ENCODE measurements at regions of chr9 and their contacts with region 1.

Region 1: GRCh38 chr9:124617471-124618141 is 110.4 kb upstream of the NR5A1 start:
- DNase-seq: peak; percentile 75
- H3K4me3 ChIP-seq: no peak overlapping the region
- H3K27ac ChIP-seq: no peak overlapping the region
- H3K4me1 ChIP-seq: no peaks in the 10 kb centered on the region
- H3K27me3 ChIP-seq: peaks cover 0 to 8% of the 10 kb centered on the region in 2 experiments
- CTCF ChIP-seq: peak; percentile 82 to 89
- POLR2A ChIP-seq: no peak

Region 2: DNA sequence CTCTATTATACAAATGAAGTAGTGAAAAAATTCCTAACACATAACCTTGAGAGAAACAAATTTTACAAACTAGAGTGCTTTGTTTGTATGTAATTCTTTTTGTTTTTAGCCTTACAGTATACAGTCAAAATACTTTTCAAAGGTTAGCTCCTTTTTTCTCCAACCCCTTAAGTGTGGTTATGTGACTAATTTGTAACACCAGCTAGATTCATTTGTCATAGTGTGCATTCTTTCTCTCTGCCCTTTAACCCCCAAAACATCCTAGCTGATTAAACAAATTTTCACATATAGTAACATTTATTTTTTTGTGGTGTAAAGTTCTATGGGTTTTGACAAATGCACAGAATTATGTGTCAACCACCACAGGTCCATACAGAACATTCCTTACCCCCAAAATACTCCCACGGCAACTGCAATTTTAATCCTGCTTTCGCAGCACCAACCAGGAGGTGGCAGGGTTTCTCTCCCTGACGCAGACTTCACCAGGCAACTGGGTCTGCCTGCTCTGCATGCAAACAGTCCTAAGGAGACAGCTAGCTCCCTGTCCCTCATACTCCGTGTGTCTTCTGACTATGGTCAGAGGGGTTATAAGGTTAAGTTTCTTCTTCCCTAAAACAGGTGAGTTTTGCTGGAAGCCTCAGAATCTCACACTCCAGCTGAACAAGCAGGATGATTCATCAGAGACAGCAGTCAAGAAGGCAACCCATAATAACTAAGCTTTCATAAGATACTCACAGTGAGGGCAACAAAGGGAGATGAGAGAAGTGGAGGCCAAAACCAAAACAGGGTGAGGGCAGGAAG is 65.9 kb before region 1 on chr9:
- CTCF ChIA-PET with region 1: interaction called, 28 read pairs
- POLR2A ChIA-PET with region 1: no interaction called
- dilution Hi-C with region 1: no loop called
- intact Hi-C with region 1: no loop called
- DNase-seq: peak; percentile 59
- H3K4me3 ChIP-seq: no peak overlapping the region
- H3K27ac ChIP-seq: no peak overlapping the region
- H3K4me1 ChIP-seq: no peaks in the 10 kb centered on the region
- H3K27me3 ChIP-seq: peaks cover 11 to 13% of the 10 kb centered on the region in 2 experiments
- CTCF ChIP-seq: peak; percentile 61 to 62
- POLR2A ChIP-seq: no peak

Region 3: GRCh38 chr9:124632077-124632621 is 14.5 kb after region 1 on chr9:
- CTCF ChIA-PET with region 1: interaction called, 26 read pairs
- POLR2A ChIA-PET with region 1: no interaction called
- dilution Hi-C with region 1: no loop called
- intact Hi-C with region 1: no loop called
- DNase-seq: peak; percentile 57
- H3K4me3 ChIP-seq: no peak overlapping the region
- H3K27ac ChIP-seq: no peak overlapping the region
- H3K4me1 ChIP-seq: no peaks in the 10 kb centered on the region
- H3K27me3 ChIP-seq: peaks cover 0 to 2% of the 10 kb centered on the region in 2 experiments
- CTCF ChIP-seq: no peak
- POLR2A ChIP-seq: no peak

Region 4: GRCh38 chr9:124675261-124676158 is 57.9 kb after region 1 on chr9:
- CTCF ChIA-PET with region 1: interaction called, 19 read pairs
- POLR2A ChIA-PET with region 1: no interaction called
- dilution Hi-C with region 1: no loop called
- intact Hi-C with region 1: no loop called
- DNase-seq: no peak
- H3K4me3 ChIP-seq: no peak overlapping the region
- H3K27ac ChIP-seq: no peak overlapping the region
- H3K4me1 ChIP-seq: peaks cover 16% of the 10 kb centered on the region
- H3K27me3 ChIP-seq: no peaks in the 10 kb centered on the region
- CTCF ChIP-seq: no peak
- POLR2A ChIP-seq: no peak

Region 5: GRCh38 chr9:124708633-124709291 is 91.2 kb after region 1 on chr9:
- CTCF ChIA-PET with region 1: interaction called, 439 read pairs
- POLR2A ChIA-PET with region 1: interaction called, 6 read pairs
- dilution Hi-C with region 1: no loop called
- intact Hi-C with region 1: loop called (anchors 1 kb)
- DNase-seq: peak; percentile 14
- H3K4me3 ChIP-seq: no peak overlapping the region
- H3K27ac ChIP-seq: no peak overlapping the region
- H3K4me1 ChIP-seq: peaks cover 9% of the 10 kb centered on the region
- H3K27me3 ChIP-seq: no peaks in the 10 kb centered on the region
- CTCF ChIP-seq: no peak
- POLR2A ChIP-seq: no peak

Region 6: GRCh38 chr9:124754289-124754688 is 136.7 kb after region 1 on chr9:
- CTCF ChIA-PET with region 1: interaction called, 82 read pairs
- POLR2A ChIA-PET with region 1: no interaction called
- dilution Hi-C with region 1: no loop called
- intact Hi-C with region 1: loop called (anchors 1 kb)
- DNase-seq: peak; percentile 33
- H3K4me3 ChIP-seq: no peak overlapping the region
- H3K27ac ChIP-seq: no peak overlapping the region
- H3K4me1 ChIP-seq: no peaks in the 10 kb centered on the region
- H3K27me3 ChIP-seq: peaks cover 30 to 52% of the 10 kb centered on the region in 2 experiments
- CTCF ChIP-seq: peak in 1 of 2 donors; percentile 34
- POLR2A ChIP-seq: no peak

Measured in endothelial cell of umbilical vein (primary cell).